ENCODE measurements at regions of chrX and their contacts with region 1.

Region 1: DNA sequence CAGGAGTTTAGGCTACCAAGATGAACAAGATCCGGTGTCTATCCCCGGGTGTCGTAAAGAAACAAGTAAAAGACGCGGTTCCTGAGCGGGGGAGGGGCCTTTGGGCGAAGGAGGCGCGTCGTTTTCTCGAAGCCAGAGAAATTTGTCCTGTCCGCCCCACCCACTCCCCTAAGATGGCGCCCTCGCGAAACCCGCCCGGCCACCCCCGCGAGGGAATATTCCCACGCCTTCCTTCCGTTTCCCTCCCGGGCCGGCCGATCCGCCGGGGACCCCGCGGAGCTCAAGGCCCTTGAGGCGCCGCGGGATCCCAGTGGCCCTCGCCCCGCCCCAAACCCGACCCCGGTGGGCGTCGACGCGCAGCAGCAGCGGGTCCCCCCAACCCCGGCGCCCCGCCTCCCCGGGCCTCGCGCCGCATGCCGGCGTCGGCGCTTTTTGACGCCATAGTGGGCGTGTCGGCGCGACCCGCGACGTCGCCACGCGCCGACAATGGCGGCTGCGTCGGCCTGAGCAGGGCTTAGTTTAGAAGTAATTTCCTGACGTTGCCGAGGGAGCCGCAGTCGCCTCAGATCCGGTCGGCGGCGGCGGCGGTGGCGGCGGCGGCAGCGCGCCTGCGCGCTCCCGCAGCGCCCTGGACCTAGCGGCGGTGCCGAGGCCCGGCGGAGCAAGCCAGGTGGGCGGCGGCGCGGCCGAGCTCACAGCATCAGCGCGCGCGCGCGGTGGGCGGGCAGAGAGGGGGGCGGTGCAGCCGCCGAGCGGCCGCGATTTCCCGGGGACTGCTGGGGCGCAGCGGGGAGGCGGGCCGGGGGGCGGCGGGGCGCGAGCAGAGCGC is at the start of gene HTATSF1:
- DNase-seq: peak; percentile 83
- H3K4me3 Mint-ChIP-seq: peak within 1 kb of the TSS; percentile 92
- H3K27ac Mint-ChIP-seq: peak within 1 kb of the TSS; percentile 99
- H3K4me1 Mint-ChIP-seq: peaks cover 20% of the 10 kb centered on the region
- H3K27me3 Mint-ChIP-seq: no peaks in the 10 kb centered on the region
- total RNA-seq, gene HTATSF1: 50.2 and 54.2 TPM in 2 replicates

Region 2: DNA sequence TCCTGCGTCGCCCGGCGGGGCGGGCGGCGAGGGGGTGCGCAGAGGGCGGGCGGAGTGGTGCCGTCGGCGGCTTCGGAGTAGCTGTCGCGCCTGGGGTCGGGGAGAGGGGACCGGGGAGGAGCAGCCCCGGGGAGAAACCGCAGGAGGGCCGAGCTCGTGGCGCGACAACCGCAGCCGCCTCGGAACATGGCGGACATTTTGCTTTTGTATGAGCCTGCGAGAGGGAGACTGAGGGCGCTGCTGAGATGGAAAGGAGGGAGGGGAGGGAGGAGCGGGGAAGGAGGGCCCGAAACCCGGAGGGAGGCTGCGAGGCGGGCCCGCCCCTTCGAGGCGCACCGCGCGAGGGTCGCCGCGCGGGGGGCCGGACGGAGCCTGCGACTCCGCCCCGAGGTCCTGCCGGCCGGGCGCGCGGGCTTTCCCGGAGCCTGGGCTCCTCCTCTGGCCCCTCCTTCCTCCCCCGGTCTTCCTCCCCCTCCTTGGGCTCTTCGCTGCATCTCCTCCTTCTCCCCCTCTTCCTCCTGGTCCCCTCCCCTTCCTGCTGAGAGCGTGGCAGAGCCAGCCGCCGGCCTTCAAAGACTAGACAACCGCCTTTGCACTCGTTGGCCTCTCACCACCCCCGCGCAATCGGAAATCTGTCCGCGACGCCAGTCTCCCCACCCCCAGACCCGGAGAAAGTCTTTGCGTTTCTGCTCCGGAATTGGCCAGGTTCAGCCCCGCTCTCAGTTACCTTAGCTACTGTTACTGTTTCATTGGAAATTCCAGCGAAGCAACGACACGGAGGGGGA is 975.4 kb before region 1 on chrX:
- intact Hi-C with region 1: loop called (anchors 5 kb)
- DNase-seq: peak; percentile 78
- H3K4me3 Mint-ChIP-seq: peak overlapping the region; percentile 99
- H3K27ac Mint-ChIP-seq: peak overlapping the region; percentile 99
- H3K4me1 Mint-ChIP-seq: peaks cover 49% of the 10 kb centered on the region
- H3K27me3 Mint-ChIP-seq: no peaks in the 10 kb centered on the region

Region 3: GRCh38 chrX:136251041-136251991 is 245.7 kb before region 1 on chrX and contains the start of gene MAP7D3:
- intact Hi-C with region 1: loop called (anchors 1 kb)
- DNase-seq: peak; percentile 61
- H3K4me3 Mint-ChIP-seq: peak within 1 kb of the TSS; percentile 87
- H3K27ac Mint-ChIP-seq: peak within 1 kb of the TSS; percentile 94
- H3K4me1 Mint-ChIP-seq: peaks cover 16% of the 10 kb centered on the region
- H3K27me3 Mint-ChIP-seq: no peaks in the 10 kb centered on the region
- total RNA-seq, gene MAP7D3: 27.3 and 29.1 TPM in 2 replicates

Region 4: GRCh38 chrX:136405126-136405525 is 91.9 kb before region 1 on chrX:
- intact Hi-C with region 1: no loop called
- DNase-seq: no peak
- H3K4me3 Mint-ChIP-seq: no peak overlapping the region
- H3K27ac Mint-ChIP-seq: no peak overlapping the region
- H3K4me1 Mint-ChIP-seq: no peaks in the 10 kb centered on the region
- H3K27me3 Mint-ChIP-seq: peaks cover 2% of the 10 kb centered on the region

Region 5: GRCh38 chrX:136597356-136597755 is 100.4 kb after region 1 on chrX:
- intact Hi-C with region 1: no loop called
- DNase-seq: no peak
- H3K4me3 Mint-ChIP-seq: no peak overlapping the region
- H3K27ac Mint-ChIP-seq: no peak overlapping the region
- H3K4me1 Mint-ChIP-seq: peaks cover 52% of the 10 kb centered on the region
- H3K27me3 Mint-ChIP-seq: no peaks in the 10 kb centered on the region

Region 6: DNA sequence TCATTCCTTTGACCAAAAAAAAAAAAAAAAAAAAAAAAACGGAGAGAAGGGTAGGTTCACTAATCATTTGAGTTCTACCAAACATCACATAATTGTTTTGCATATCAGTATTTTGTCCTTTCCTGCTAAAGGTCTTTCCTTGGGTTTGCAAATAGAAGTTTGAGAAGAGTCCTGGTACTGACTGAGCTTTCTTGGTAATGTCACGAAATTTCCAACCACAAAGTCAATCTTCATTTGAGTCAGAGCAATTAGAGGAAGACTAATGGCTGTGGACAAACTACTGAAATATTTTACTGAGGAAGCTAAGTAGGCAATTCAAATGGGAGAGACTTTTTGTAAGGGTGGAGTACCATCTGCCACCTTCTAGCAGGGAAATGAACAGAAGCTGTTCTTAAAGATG is 129.3 kb after region 1 on chrX:
- intact Hi-C with region 1: loop called (anchors 1 kb)
- DNase-seq: no peak
- H3K4me3 Mint-ChIP-seq: peak overlapping the region; percentile 30
- H3K27ac Mint-ChIP-seq: peak overlapping the region; percentile 85
- H3K4me1 Mint-ChIP-seq: peaks cover 94% of the 10 kb centered on the region
- H3K27me3 Mint-ChIP-seq: no peaks in the 10 kb centered on the region

Region 7: GRCh38 chrX:136711147-136711546 is 214.2 kb after region 1 on chrX:
- intact Hi-C with region 1: loop called (anchors 5 kb)
- DNase-seq: no peak
- H3K4me3 Mint-ChIP-seq: no peak overlapping the region
- H3K27ac Mint-ChIP-seq: peak overlapping the region; percentile 91
- H3K4me1 Mint-ChIP-seq: peaks cover 51% of the 10 kb centered on the region
- H3K27me3 Mint-ChIP-seq: no peaks in the 10 kb centered on the region

Region 8: GRCh38 chrX:136909706-136910564 is 413.0 kb after region 1 on chrX:
- intact Hi-C with region 1: loop called (anchors 1 kb)
- DNase-seq: peak; percentile 51
- H3K4me3 Mint-ChIP-seq: peak overlapping the region; percentile 95
- H3K27ac Mint-ChIP-seq: peak overlapping the region; percentile 88
- H3K4me1 Mint-ChIP-seq: peaks cover 23% of the 10 kb centered on the region
- H3K27me3 Mint-ChIP-seq: no peaks in the 10 kb centered on the region

Measured in activated T-helper 1 cell treated with anti-CD3 and anti-CD28 coated beads, Interleukin-12 subunit alpha, Interleukin-12 subunit beta, Interleukin-2, Interleukin-4 antibody, amounts not matched to agents 30 ng/mL and 10 ng/mL and 1 ng/mL, durations not matched to agents 14 hours and 24 hours and 36 hours (primary cell).